Common myeloid progenitor, CD34-positive (primary cell): ENCODE measurements at regions of chr3 and their contacts with region 1.

Region 1: DNA sequence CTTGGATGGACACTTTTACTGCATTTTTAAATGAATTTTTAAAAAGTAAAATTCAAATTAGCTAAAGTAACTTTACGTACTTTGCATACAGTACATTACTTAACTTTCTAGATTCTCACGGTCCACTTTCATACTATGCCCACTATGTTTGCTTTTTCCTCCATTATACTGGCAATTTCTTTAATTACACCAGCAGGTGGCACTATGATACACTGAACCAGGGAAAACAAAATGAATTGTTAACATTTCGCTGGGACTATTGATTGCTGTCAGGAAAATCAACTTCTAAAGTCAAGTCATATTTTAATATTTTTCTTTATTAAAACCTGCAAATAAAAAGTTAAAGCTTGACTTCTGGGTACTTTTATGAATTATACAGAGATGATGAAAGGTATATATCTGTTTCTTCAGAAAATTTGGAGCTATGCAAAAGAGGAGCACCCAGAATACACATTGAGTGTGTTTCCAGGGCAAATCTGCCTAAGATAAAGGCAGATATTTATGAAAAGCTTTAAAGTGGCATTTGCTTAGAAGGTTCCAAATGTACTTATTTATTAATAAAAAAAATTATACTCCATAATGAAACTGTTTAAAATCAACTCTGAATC is 21.8 kb upstream of the POU1F1 start:
- DNase-seq: peak; percentile 45 to 57 (median 57)
- H3K4me3 ChIP-seq: no peak overlapping the region
- H3K27ac ChIP-seq: no peak overlapping the region
- H3K4me1 ChIP-seq: peaks cover 0 to 2% (median under 1%) of the 10 kb centered on the region in 4 experiments
- H3K27me3 ChIP-seq: no peaks in the 10 kb centered on the region

Region 2: GRCh38 chr3:87196876-87197275 is 101.3 kb before region 1 on chr3:
- CTCF ChIA-PET with region 1: no interaction called
- POLR2A ChIA-PET with region 1: no interaction called
- DNase-seq: no peak
- H3K4me3 ChIP-seq: no peak overlapping the region
- H3K27ac ChIP-seq: no peak overlapping the region
- H3K4me1 ChIP-seq: no peaks in the 10 kb centered on the region
- H3K27me3 ChIP-seq: no peaks in the 10 kb centered on the region

Region 3: DNA sequence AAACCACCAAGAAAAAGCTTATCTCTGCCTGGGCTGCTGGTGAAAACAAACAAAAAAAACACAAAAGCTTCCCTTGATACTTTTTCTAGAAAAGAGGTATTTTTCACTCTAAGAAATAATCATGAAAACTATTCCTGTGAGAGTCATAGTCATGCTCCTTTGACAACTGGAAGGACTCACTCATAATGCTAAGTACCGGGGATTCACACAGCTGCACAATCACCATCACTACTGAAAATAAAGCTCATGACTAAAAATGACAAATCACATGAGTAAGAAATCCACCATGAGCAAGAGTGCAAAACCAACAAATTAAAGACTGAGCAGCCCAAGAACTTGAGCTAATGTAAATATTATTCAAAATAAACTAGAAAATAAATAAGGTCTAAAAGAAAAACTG is 11.2 kb before region 1 on chr3:
- CTCF ChIA-PET with region 1: interaction called, 13 read pairs
- POLR2A ChIA-PET with region 1: no interaction called
- DNase-seq: no peak
- H3K4me3 ChIP-seq: no peak overlapping the region
- H3K27ac ChIP-seq: no peak overlapping the region
- H3K4me1 ChIP-seq: no peaks in the 10 kb centered on the region
- H3K27me3 ChIP-seq: no peaks in the 10 kb centered on the region

Region 4: DNA sequence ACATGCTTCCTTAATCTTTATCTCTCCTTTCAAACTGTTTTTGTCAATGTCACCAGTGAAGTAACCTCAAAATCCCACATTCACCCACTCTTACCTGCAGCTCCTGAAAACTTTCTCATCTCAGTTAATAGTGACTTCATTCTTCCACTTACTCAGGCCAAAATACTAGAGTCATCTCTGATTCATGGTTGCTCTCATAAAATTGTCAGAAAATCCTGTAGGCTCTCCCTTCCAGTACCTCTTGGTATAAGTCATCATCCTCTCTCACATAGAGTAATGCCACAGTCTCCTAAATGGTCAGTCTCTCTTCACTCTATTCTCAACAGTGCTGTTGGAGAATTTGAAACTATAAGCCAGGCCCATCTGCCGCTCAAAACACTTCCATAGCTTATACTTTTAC is 13.1 kb after region 1 on chr3:
- CTCF ChIA-PET with region 1: interaction called, 13 read pairs
- POLR2A ChIA-PET with region 1: no interaction called
- DNase-seq: no peak
- H3K4me3 ChIP-seq: no peak overlapping the region
- H3K27ac ChIP-seq: no peak overlapping the region
- H3K4me1 ChIP-seq: no peaks in the 10 kb centered on the region
- H3K27me3 ChIP-seq: no peaks in the 10 kb centered on the region